Activated T-helper 1 cell treated with anti-CD3 and anti-CD28 coated beads, Interleukin-12 subunit alpha, Interleukin-12 subunit beta, Interleukin-2, Interleukin-4 antibody, amounts not matched to agents 30 ng/mL and 10 ng/mL and 1 ng/mL, durations not matched to agents 14 hours and 24 hours and 36 hours (primary cell): ENCODE measurements at regions of chr18 and their contacts with region 1.

Region 1: GRCh38 chr18:212780-213179 is 54.4 kb downstream of the USP14 start:
- DNase-seq: no peak
- H3K4me3 Mint-ChIP-seq: no peak overlapping the region
- H3K27ac Mint-ChIP-seq: no peak overlapping the region
- H3K4me1 Mint-ChIP-seq: peaks cover 10% of the 10 kb centered on the region
- H3K27me3 Mint-ChIP-seq: no peaks in the 10 kb centered on the region

Region 2: GRCh38 chr18:148841-149240 is 63.9 kb before region 1 on chr18:
- intact Hi-C with region 1: no loop called
- DNase-seq: no peak
- H3K4me3 Mint-ChIP-seq: no peak overlapping the region
- H3K27ac Mint-ChIP-seq: no peak overlapping the region
- H3K4me1 Mint-ChIP-seq: no peaks in the 10 kb centered on the region
- H3K27me3 Mint-ChIP-seq: peaks cover 10% of the 10 kb centered on the region

Region 3: GRCh38 chr18:179499-179898 is 33.3 kb before region 1 on chr18:
- intact Hi-C with region 1: loop called (anchors 5 kb)
- DNase-seq: no peak
- H3K4me3 Mint-ChIP-seq: no peak overlapping the region
- H3K27ac Mint-ChIP-seq: no peak overlapping the region
- H3K4me1 Mint-ChIP-seq: peaks cover 29% of the 10 kb centered on the region
- H3K27me3 Mint-ChIP-seq: no peaks in the 10 kb centered on the region

Region 4: GRCh38 chr18:1104181-1104881 is 891.6 kb after region 1 on chr18:
- intact Hi-C with region 1: no loop called
- DNase-seq: no peak
- H3K4me3 Mint-ChIP-seq: no peak overlapping the region
- H3K27ac Mint-ChIP-seq: no peak overlapping the region
- H3K4me1 Mint-ChIP-seq: no peaks in the 10 kb centered on the region
- H3K27me3 Mint-ChIP-seq: no peaks in the 10 kb centered on the region